ENCODE measurements at regions of chr15 and their contacts with region 1.

Region 1: GRCh38 chr15:39686000-39686613 is 96.5 kb downstream of the FSIP1 start:
- DNase-seq: peak; percentile 66
- H3K4me3 ChIP-seq: no peak overlapping the region
- H3K27ac ChIP-seq: no peak overlapping the region
- H3K4me1 ChIP-seq: no peaks in the 10 kb centered on the region
- H3K27me3 ChIP-seq: no peaks in the 10 kb centered on the region
- CTCF ChIP-seq: peak; percentile 61 to 64
- POLR2A ChIP-seq: no peak

Region 2: DNA sequence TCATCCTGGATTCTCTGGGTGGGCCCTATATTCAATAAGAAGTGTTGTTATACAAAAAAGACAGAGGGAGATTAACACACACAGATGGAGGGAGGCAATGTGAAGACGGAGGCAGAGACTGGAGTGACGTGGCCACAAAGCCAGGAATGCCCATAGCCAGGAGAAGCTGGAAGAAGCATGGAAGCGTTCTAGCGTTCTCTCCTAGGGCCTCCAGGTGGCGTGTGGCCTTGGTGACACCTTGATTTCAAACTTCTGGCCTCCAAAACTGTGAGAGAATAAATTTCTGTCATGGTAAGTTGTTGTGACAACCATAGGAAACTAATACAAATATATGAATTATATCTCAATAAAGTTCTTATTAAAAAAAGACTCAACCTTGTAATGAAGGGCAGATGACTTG is 84.0 kb before region 1 on chr15:
- CTCF ChIA-PET with region 1: interaction called, 14 read pairs
- POLR2A ChIA-PET with region 1: no interaction called
- dilution Hi-C with region 1: no loop called
- intact Hi-C with region 1: loop called (anchors 1 kb)
- DNase-seq: no peak
- H3K4me3 ChIP-seq: no peak overlapping the region
- H3K27ac ChIP-seq: no peak overlapping the region
- H3K4me1 ChIP-seq: peaks cover 7% of the 10 kb centered on the region
- H3K27me3 ChIP-seq: no peaks in the 10 kb centered on the region
- CTCF ChIP-seq: peak; percentile 24 to 31
- POLR2A ChIP-seq: no peak

Region 3: DNA sequence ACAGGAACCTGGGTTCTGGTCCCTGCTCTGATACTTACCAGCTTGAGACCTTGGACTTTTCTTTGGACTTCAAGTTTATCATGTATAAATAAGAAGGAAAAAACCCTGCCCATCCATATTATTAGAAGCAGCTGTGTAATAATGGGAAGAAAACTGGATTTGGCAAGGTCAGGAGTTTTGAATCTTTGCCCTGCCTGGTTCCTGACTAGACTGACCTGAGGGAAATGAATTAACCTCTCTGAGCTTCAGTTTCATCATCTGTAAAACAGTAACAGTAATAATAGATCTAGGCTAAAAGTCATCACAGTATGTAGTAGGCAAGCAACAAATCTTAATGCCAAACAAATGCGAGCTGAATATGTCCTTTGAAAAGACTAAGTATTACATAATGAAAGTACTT is 27.7 kb after region 1 on chr15:
- CTCF ChIA-PET with region 1: interaction called, 10 read pairs
- POLR2A ChIA-PET with region 1: no interaction called
- dilution Hi-C with region 1: no loop called
- intact Hi-C with region 1: no loop called
- DNase-seq: no peak
- H3K4me3 ChIP-seq: no peak overlapping the region
- H3K27ac ChIP-seq: no peak overlapping the region
- H3K4me1 ChIP-seq: no peaks in the 10 kb centered on the region
- H3K27me3 ChIP-seq: no peaks in the 10 kb centered on the region
- CTCF ChIP-seq: no peak
- POLR2A ChIP-seq: no peak

Region 4: DNA sequence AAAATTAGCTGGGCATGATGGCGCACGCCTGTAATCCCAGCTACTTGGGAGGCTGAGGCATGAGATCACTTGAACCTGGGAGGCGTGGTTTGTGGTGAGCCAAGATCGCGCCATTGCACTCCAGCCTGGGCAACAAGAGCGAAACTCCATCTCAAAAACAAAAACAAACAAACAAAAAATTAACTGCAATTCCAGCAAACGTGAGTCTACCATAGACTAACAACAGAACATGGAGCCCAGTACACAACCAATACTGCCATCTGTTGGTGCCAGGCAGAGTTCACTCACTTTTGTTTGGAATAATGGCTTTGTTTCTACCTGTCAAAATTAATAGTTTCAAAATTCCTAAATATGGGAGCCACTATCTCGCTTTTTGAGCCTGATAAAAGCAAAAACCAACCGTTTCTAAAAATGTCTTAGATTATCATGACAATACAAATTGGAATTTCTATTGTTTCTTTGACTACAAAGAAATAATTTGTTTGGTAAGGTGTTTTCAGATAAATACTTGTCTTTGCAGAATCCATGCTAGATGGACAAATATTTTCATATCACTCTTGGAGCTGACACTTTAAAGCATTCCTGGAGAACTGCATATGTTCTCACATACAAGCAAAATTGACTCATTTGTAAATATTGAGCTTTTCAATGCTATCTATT is 188.9 kb after region 1 on chr15:
- CTCF ChIA-PET with region 1: interaction called, 13 read pairs
- POLR2A ChIA-PET with region 1: no interaction called
- dilution Hi-C with region 1: no loop called
- intact Hi-C with region 1: loop called (anchors 2 kb)
- DNase-seq: peak; percentile 67
- H3K4me3 ChIP-seq: no peak overlapping the region
- H3K27ac ChIP-seq: no peak overlapping the region
- H3K4me1 ChIP-seq: no peaks in the 10 kb centered on the region
- H3K27me3 ChIP-seq: no peaks in the 10 kb centered on the region
- CTCF ChIP-seq: peak; percentile 53 to 70
- POLR2A ChIP-seq: no peak

Measured in endothelial cell of umbilical vein (primary cell).